ENCODE measurements at regions of chr7 and their contacts with region 1.

Region 1: DNA sequence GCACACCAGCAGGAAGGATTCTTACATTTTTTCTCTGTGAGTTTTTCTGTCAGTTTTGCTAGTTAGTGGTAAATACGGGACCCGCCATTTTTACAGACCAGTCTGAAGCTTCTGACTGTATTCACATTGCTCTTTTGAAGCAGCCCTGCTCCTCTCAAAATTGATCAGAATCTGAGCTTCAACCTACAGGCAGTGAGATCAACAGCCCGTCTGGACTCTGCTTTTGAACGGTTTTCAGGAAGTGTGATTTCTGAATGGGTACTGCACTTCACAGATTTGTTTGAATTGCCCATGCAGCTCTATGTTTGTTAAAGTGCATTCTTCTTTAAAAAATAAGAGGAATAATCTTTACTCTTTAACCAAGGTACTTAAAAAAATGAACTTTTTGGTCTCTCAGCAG is 8.9 kb downstream of the PURB start:
- DNase-seq: no peak
- ATAC-seq: no peak
- H3K4me3 ChIP-seq: no peak overlapping the region
- H3K27ac ChIP-seq: no peak overlapping the region
- H3K4me1 ChIP-seq: peaks cover 20% of the 10 kb centered on the region
- H3K27me3 ChIP-seq: no peaks in the 10 kb centered on the region
- CTCF ChIP-seq: no peak

Region 2: DNA sequence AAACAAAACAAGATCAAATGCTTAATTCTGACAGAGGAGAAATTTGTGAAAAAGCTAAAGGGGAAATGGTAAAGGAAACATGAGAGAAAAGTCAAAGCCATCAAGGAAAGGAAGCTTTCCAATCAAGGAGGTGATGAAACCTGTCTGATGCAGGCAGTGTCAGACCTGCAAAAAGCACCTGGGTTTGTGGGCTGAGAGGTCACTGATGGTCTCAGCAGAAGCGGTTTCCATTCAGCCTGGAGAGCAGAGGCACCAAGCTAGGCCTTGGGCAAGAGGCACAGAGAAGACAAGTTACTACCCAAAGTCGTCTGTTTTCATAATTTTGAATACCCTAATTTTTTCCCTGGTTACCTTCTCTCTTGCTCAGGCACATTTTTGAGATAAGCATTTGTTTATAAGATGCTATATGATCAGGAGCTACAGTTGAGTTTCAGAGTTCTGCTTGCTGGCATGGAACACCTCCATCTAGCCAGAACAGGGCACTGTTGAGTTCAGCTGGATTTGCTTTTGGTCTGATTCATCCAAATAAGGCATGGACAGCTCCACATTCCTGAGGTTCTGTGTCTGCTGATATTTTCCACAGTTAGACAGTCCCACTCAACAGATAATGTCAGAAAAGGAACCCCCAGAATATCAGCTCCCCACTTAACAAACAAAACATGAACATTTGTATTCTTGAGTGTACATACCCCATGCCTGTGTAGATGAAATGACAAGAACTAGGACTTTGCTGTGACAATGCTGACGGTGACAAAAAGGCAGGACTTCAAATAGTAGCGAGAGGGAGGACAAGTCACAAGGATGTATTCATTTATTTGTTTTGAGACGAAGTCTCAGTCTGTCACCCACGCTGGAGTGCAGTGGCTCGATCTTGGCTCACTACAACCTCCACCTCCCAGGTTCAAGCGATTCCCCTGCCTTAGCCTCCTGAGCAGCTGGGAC is 84.8 kb before region 1 on chr7:
- CTCF ChIA-PET with region 1: no interaction called
- POLR2A ChIA-PET with region 1: no interaction called
- intact Hi-C with region 1: no loop called
- DNase-seq: no peak
- ATAC-seq: no peak
- H3K4me3 ChIP-seq: no peak overlapping the region
- H3K27ac ChIP-seq: no peak overlapping the region
- H3K4me1 ChIP-seq: peaks cover 3% of the 10 kb centered on the region; the same call in 1 of the 2 replicates
- H3K27me3 ChIP-seq: no peaks in the 10 kb centered on the region
- CTCF ChIP-seq: 0 out of 2 replicates have a peak, but pooled peaks have one; percentile 8

Region 3: DNA sequence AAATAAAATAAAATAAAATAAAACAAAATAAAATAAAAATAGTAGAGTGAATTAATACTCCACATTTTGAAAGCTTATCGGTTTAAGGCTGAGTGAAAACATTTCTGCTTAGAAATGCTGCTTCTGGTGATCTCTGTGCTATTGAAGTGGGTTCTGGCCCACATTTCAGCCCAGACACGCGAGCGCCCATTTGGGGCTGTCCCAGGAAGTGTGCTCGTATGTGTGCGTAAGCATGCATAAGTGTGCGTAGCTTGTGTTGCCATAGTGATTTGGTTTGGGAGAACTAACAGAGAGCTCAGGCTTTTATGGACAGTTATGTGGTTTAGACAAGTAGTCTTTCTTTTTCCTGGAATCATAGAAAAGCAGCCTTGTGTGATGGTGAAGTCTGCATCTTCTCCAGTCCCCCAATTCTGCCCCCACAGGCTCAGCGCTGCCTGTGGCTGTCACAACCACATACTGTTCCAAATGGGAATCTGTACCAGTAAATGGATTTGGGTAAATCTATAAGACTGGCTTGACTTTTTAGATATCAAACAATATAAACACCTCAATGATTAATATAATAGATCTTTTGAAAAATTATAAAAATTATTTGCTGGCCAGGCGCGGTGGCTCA is 38.7 kb after region 1 on chr7:
- CTCF ChIA-PET with region 1: interaction called, 12 read pairs
- POLR2A ChIA-PET with region 1: no interaction called
- intact Hi-C with region 1: no loop called
- DNase-seq: no peak
- ATAC-seq: no peak
- H3K4me3 ChIP-seq: no peak overlapping the region
- H3K27ac ChIP-seq: no peak overlapping the region
- H3K4me1 ChIP-seq: no peaks in the 10 kb centered on the region
- H3K27me3 ChIP-seq: no peaks in the 10 kb centered on the region
- CTCF ChIP-seq: no peak

Region 4: GRCh38 chr7:45065031-45065995 is 188.9 kb after region 1 on chr7:
- CTCF ChIA-PET with region 1: no interaction called
- POLR2A ChIA-PET with region 1: no interaction called
- intact Hi-C with region 1: no loop called
- DNase-seq: no peak
- ATAC-seq: no peak
- H3K4me3 ChIP-seq: no peak overlapping the region
- H3K27ac ChIP-seq: no peak overlapping the region
- H3K4me1 ChIP-seq: no peaks in the 10 kb centered on the region
- H3K27me3 ChIP-seq: no peaks in the 10 kb centered on the region
- CTCF ChIP-seq: no peak